CD4-positive, alpha-beta T cell (primary cell): ENCODE measurements at regions of chr2 and their contacts with region 1.

Region 1: DNA sequence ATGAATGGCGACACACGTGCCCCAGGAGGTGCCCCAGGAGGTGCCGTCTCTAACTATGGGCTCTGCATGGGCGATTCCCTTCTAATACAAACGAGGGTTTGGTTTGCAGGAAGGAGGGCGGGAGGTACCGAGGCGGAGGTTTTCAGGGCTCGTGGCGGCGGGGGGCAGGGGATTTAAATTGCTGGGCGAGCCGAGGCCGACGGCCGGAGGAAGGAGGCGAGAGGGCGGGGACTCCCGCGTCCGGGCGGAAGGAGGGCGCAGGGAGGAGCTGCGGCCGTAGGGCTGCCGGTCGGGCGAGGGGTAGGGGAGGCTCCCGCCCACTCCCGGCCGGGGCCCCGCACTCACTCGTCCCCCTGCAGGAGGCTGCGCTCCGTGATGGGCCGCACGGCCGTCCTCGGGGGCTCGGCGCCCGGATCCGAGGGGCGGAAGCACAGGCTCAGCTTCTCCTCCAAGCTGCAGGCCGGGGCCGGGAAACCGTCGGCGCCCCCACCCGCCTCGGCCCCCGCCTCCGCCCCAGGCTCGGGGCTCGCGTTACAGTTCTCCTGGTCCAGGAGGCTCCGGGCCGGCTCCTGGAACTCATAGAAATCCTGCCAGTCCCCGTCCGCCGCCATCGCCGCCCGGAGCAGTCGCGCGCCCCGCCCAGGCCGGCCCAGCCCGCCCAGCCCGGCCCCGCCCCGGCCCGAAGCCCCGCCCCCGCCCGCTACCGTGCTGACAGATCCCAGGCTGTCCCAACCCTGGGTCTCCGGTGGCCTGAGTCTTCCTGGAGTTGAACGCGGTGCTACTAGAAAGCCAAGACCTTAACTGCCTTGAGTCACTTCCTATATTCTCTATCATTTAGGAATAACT is at the start of gene FEZ2:
- DNase-seq: peak; percentile 25 to 78 (median 52)
- ATAC-seq: peak; percentile 84
- H3K4me3 ChIP-seq: peak within 1 kb of the TSS; percentile 75
- H3K4me3 Mint-ChIP-seq: peak within 1 kb of the TSS; percentile 97
- H3K27ac ChIP-seq: no peak within 1 kb of the TSS
- H3K27ac Mint-ChIP-seq: peak within 1 kb of the TSS; percentile 67
- H3K4me1 ChIP-seq: peaks cover 22% of the 10 kb centered on the region
- H3K4me1 Mint-ChIP-seq: peaks cover 41% of the 10 kb centered on the region
- H3K27me3 ChIP-seq: no peaks in the 10 kb centered on the region
- H3K27me3 Mint-ChIP-seq: no peaks in the 10 kb centered on the region
- CTCF ChIP-seq: no peak
- total RNA-seq, gene FEZ2: 4.8 to 5.6 TPM

Region 2: DNA sequence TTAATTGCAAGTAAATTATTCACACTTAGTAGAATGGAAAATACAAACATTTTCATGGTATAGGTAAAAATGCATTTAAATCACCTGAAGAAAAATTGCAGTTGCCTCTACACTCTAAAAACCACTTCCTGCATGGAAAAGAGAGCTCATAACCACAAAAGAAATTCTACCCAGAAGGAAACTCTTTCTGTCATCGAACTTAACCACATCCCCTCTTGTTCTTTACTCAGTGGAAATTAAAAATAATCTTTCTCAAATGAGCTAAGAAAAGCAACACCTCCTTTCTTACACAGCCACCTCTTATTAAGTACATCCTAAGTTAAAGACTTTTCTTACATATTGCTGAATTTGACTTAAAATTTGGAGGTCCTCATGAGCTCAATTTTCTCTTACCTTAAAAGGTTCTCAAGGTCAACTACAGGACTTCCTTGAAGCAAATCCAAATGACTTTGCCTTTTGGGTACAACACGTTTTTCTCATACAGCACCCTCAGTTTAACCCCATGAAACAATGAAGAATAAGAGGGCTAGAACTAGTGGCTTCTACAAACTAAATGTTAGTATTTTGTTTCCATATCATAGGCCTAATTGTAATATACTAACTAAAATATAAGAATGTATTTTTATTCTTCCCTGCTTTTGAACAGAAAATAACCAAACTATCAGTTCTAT is 351.3 kb before region 1 on chr2:
- CTCF ChIA-PET with region 1: no interaction called
- POLR2A ChIA-PET with region 1: no interaction called
- intact Hi-C with region 1: loop called in 1 of 2 experiments (anchors 10 kb)
- DNase-seq: peak in 3 of 14 experiments; percentile 56 to 90 (median 63)
- ATAC-seq: peak; percentile 85
- H3K4me3 ChIP-seq: no peak overlapping the region
- H3K4me3 Mint-ChIP-seq: peak overlapping the region; percentile 58
- H3K27ac ChIP-seq: no peak overlapping the region
- H3K27ac Mint-ChIP-seq: peak overlapping the region; percentile 30
- H3K4me1 ChIP-seq: peaks cover 27% of the 10 kb centered on the region
- H3K4me1 Mint-ChIP-seq: peaks cover 65% of the 10 kb centered on the region
- H3K27me3 ChIP-seq: no peaks in the 10 kb centered on the region
- H3K27me3 Mint-ChIP-seq: no peaks in the 10 kb centered on the region
- CTCF ChIP-seq: no peak

Region 3: DNA sequence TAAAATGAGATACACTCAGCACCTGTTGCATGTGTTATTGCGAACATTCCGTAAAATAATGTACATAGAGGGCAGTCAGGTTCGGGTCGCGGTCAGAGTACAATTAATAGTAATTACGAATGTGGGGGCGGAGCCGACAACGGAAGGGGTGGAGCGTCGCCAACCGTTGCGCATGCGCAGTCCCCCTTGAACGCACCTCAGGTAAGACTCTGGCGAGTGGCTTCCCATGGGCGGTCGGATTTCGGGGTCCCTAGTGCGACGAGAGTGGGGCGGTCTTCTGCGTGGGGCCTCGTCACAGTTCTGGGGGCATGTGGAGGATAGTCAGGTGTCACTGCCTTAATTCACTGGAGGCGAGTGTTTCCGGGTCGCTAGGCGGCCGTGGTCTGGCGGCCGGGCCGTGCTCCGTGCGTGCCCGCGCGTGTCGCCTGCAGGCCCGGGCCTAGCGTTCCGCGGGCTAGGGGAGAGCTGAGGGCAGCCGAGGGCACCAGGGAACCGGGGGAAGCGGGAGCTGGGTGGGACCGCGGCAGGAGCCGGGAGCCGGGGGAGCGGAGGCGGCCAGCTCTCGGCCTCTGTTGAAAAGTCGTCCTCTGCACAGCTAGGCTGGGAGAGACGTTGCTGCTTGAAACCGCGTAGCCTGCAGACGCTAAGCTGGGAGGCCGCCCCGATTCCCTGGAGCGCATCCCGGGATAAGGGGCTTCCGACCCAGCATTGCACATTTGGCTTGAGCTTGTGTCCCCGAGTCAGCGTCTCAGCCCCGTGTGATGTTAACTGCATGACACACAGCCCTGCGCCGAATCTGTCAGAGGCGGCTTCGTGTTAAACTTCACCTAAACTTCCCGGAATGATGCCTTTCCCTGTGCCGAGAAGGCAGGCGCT is 598.8 kb after region 1 on chr2 and contains the start of gene CEBPZOS:
- CTCF ChIA-PET with region 1: no interaction called
- POLR2A ChIA-PET with region 1: no interaction called
- intact Hi-C with region 1: loop called in 1 of 2 experiments (anchors 10 kb)
- DNase-seq: peak; percentile 81 to 94 (median 90)
- ATAC-seq: peak; percentile 87
- H3K4me3 ChIP-seq: peak within 1 kb of the TSS; percentile 87
- H3K4me3 Mint-ChIP-seq: peak within 1 kb of the TSS; percentile 99
- H3K27ac ChIP-seq: peak within 1 kb of the TSS; percentile 70 to 82
- H3K27ac Mint-ChIP-seq: peak within 1 kb of the TSS; percentile 95
- H3K4me1 ChIP-seq: peaks cover 34% of the 10 kb centered on the region
- H3K4me1 Mint-ChIP-seq: peaks cover 35% of the 10 kb centered on the region
- H3K27me3 ChIP-seq: no peaks in the 10 kb centered on the region
- H3K27me3 Mint-ChIP-seq: no peaks in the 10 kb centered on the region
- CTCF ChIP-seq: no peak
- total RNA-seq, gene CEBPZOS: 23.4 to 24.6 TPM